Heart right ventricle (tissue), 16 donors: ENCODE measurements at regions of chr11 and their contacts with region 1.

Region 1: DNA sequence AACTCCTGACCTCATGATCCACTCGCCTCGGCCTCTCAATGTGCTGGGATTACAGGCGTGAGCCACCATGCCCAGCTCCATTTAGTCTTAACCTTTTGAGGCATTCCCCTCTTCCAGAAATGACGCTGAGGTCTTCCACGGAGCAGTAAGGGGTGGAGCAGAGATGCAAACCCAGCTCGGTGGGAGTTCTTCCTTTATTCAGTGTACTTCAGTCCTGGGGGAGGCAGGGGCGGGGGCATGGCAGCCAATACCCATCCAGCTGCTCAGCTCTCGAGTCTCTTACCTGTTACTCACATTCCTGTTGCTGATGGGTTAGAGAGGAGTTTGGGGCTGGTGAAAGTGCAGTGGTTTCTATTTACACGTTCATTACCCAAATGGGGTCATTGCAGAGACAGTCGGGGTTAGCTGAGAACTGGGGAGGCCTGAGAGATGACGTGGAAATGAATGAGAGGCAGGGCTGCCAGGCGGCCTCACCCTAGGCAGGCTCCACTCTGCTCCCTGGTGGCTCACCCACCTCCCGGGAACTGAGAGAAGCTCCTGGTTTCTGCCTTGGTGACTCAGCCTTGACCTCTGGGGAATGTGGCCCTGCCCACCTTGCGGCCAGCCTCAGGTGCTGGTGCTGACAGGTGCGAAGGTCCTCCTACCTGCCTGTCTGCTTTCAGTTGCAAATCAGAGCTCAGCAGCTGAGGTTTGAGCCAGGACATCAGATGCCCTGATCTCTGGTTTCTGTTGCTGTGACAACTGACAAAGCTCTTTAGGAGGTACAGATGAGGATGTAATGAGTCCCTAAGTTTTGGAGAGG is 13.4 kb upstream of the ST14 start:
- DNase-seq: peak in 1 of 2 donors; percentile 27
- ATAC-seq: peak; percentile 38 to 76 (median 60)
- H3K4me3 ChIP-seq: no peak overlapping the region
- H3K27ac ChIP-seq: peak overlapping the region in 9 of 10 donors; percentile 12 to 87 (median 54)
- H3K4me1 ChIP-seq: peaks cover 6 to 65% (median 31%) of the 10 kb centered on the region in 9 donors
- H3K27me3 ChIP-seq: no peaks in the 10 kb centered on the region
- CTCF ChIP-seq: peak in 7 of 9 donors; percentile 12 to 52 (median 34)

Region 2: DNA sequence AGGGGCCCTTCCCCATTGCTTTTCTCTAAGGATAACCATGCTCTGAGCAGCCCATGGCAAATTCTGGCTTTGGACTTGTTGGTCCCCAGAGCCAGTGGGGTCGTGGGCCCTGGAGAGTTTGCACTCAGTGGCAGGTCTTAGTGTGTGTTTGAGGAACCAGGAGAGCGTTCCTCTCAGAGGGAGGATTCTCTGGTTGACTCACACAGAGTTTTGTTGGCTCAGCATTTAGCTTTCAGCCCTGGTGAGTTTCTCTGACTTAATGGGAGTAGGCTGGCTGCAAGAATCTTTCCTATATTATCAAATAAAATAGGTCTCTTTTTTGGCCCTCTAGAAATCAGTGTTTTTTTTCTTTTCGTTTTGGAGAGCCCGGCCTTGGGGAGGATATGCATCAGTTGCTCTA is 34.3 kb after region 1 on chr11:
- intact Hi-C with region 1: loop called in 1 of 10 experiments (anchors 1 kb)
- DNase-seq: no peak
- ATAC-seq: peak in 2 of 8 donors; percentile 7 to 23
- H3K4me3 ChIP-seq: no peak overlapping the region
- H3K27ac ChIP-seq: peak overlapping the region in 9 of 10 donors; percentile 25 to 86 (median 82)
- H3K4me1 ChIP-seq: peaks cover 20 to 51% (median 47%) of the 10 kb centered on the region in 9 donors
- H3K27me3 ChIP-seq: no peaks in the 10 kb centered on the region
- CTCF ChIP-seq: no peak